ENCODE measurements at regions of chr13 and their contacts with region 1.

Region 1: GRCh38 chr13:59391696-59392095 is 772.0 kb downstream of the DIAPH3 start:
- DNase-seq: no peak
- H3K4me3 ChIP-seq: no peak overlapping the region
- H3K27ac ChIP-seq: no peak overlapping the region
- H3K4me1 ChIP-seq: peaks cover 0 to 7% (median 4%) of the 10 kb centered on the region in 3 donors
- H3K27me3 ChIP-seq: no peaks in the 10 kb centered on the region
- CTCF ChIP-seq: peak; percentile 30 to 76 (median 69)
- POLR2A ChIP-seq: no peak

Region 2: GRCh38 chr13:58437427-58437826 is 954.3 kb before region 1 on chr13:
- intact Hi-C with region 1: no loop called
- DNase-seq: no peak
- H3K4me3 ChIP-seq: no peak overlapping the region
- H3K27ac ChIP-seq: no peak overlapping the region
- H3K4me1 ChIP-seq: no peaks in the 10 kb centered on the region
- H3K27me3 ChIP-seq: no peaks in the 10 kb centered on the region
- CTCF ChIP-seq: no peak
- POLR2A ChIP-seq: no peak

Region 3: GRCh38 chr13:59677966-59678814 is 286.5 kb after region 1 on chr13:
- intact Hi-C with region 1: loop called (anchors 10 kb)
- DNase-seq: no peak
- H3K4me3 ChIP-seq: no peak overlapping the region
- H3K27ac ChIP-seq: no peak overlapping the region
- H3K4me1 ChIP-seq: peaks cover 0 to 6% (median 0%) of the 10 kb centered on the region in 3 donors
- H3K27me3 ChIP-seq: no peaks in the 10 kb centered on the region
- CTCF ChIP-seq: peak; percentile 34 to 76 (median 60)
- POLR2A ChIP-seq: no peak

Region 4: DNA sequence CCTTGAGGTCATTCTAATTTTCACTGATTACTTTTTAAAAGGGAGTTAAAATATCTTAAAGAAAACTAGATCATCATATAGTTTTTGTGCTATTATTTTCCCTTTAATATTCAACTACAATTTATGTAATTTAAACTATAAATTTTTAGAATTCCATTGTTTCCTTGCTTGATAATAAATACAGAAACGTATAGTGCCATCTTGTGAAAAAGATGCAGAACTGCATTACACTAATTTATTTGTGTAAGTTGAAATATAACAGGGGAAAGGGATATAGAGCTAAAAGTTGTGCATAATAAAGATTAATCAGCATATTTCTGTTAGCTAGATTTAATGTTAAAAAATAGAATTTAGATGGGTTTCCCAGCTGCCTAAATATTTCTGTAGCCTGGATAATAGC is 943.8 kb after region 1 on chr13:
- intact Hi-C with region 1: loop called (anchors 10 kb)
- DNase-seq: no peak
- H3K4me3 ChIP-seq: no peak overlapping the region
- H3K27ac ChIP-seq: no peak overlapping the region
- H3K4me1 ChIP-seq: no peaks in the 10 kb centered on the region
- H3K27me3 ChIP-seq: peaks cover 0 to 25% (median 0%) of the 10 kb centered on the region in 4 donors
- CTCF ChIP-seq: peak; percentile 6 to 62 (median 48)
- POLR2A ChIP-seq: no peak

Measured in esophagus squamous epithelium (tissue), 5 donors.